ENCODE measurements at regions of chr4 and their contacts with region 1.

Region 1: GRCh38 chr4:177607107-177607573 is 164.9 kb upstream of the AGA start:
- DNase-seq: no peak
- ATAC-seq: no peak

Region 2: DNA sequence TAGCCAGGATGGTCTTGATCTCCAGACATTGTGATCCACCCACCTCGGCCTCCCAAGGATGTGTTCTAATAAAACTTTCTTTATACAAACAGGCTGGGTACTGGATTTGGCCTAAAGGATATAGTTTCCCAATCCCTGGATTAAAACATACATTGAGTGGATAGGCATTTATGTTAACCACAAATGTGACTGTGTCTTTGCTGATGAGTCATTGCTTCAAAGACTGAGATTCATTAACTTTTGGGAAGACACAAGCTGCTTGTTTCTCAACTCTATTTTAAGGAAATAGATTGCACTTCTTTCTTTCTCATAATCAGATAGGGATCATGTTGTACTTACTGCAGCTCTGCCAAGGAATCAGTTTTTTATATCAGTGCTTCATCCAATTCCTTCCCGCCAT is 33.6 kb before region 1 on chr4:
- intact Hi-C with region 1: loop called in 1 of 2 experiments (anchors 2 kb)
- DNase-seq: no peak
- ATAC-seq: no peak

Region 3: GRCh38 chr4:177706916-177707315 is 99.8 kb after region 1 on chr4:
- intact Hi-C with region 1: no loop called
- DNase-seq: no peak
- ATAC-seq: no peak